ENCODE measurements at regions of chr4 and their contacts with region 1.

Region 1: DNA sequence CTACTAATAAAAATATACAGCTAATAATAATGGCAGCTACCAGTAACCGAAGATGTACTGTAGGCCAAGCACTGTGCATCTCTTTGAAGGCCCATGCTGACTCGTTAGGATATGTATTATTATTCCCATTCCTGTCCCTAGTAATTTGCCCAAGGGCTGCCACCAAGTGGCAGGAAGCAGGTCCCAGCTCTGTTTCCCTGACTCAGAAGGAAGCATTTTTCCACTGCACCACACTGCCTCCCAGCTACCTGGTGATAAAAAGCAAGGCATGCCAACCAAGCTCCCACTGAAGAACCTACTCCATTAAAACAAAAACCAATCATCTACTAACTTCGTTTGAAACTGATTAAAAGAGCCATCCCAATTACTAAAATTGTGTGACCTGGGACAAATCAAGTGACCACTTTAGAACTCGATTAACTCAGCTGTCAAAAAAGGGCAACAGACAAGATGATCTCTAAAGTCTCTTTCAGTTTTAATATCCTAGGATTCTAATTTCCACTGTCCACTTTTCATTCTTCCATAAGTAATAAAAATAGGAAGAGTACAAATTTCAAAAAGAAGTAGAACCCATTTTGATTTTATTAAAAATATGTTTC is 24.3 kb upstream of the PGM2 start:
- DNase-seq: peak; percentile 63 to 78
- H3K4me3 ChIP-seq: no peak overlapping the region
- H3K27ac ChIP-seq: no peak overlapping the region
- H3K4me1 ChIP-seq: no peaks in the 10 kb centered on the region
- H3K27me3 ChIP-seq: no peaks in the 10 kb centered on the region
- CTCF ChIP-seq: peak; percentile 12 to 97 (median 72)
- POLR2A ChIP-seq: no peak

Region 2: DNA sequence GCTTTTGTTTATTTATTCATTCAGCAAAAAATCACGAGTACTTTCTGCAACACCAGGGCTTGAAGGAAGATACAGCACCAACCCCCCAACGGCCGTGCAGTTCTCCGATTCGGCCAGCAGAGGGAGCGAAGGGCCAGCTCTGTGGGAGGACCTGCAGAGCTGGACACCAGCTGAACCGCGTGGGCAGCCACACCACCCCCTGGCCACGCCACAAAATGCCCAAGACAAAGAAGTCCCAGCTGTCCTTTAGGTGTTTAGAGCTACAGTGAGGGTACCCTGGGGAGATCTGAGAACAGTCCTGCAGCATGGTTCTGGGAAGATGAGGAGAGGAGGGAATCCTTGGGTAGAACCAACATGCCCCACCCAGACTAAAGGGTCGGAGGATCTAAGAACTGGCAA is 199.1 kb before region 1 on chr4:
- intact Hi-C with region 1: loop called (anchors 2 kb)
- DNase-seq: peak; percentile 83 to 87
- H3K4me3 ChIP-seq: no peak overlapping the region
- H3K27ac ChIP-seq: no peak overlapping the region
- H3K4me1 ChIP-seq: peaks cover 0 to 6% of the 10 kb centered on the region in 2 donors
- H3K27me3 ChIP-seq: no peaks in the 10 kb centered on the region
- CTCF ChIP-seq: peak; percentile 96 to 99 (median 98)
- POLR2A ChIP-seq: no peak

Region 3: DNA sequence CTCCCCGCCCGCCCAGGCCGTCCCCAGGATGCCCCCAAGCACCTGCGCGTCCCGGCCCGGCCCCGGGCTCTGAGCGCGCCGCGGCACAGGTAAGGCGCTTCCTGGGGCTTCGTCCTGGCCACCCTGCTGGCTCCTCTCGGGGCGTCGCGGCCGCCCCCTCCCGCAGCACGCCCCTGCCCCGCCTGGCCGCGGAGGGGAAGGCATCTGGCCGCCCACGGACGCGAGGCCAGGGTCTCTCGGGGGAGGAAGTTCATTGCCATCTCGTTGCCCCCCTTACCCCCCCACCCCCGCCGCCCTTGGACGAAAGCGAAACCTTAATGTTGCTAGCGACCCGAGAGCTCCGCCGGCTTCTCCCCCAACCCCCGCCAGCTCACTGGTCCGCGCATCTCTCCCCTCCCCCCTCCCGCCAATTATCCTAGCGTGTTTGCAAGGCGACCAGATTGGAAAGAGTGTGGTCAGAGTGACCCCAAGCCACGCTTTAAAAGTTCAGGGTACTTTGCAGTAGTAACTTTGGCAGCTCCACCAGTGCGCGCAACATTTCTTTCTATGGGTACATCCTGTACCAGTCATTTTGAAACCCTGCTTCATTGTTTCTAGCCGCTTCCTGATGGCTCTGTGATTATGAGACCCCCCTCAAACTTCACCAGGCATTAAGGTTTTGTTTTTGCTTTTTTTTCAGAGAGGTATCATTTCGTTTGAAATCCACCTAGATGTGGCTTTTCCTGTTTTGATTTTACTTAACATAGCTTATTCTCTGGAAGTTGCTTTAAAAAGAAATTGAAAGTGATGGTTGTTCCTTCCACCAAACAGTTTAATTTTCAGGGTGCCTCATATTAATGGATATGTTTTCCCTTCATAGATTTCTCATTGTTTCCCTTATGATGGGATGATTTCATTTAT is 89.3 kb after region 1 on chr4:
- intact Hi-C with region 1: loop called (anchors 10 kb)
- DNase-seq: peak; percentile 64 to 65
- H3K4me3 ChIP-seq: peak overlapping the region; percentile 27 to 94 (median 77)
- H3K27ac ChIP-seq: peak overlapping the region; percentile 75 to 89 (median 78)
- H3K4me1 ChIP-seq: peaks cover 0 to 9% of the 10 kb centered on the region in 2 donors
- H3K27me3 ChIP-seq: no peaks in the 10 kb centered on the region
- CTCF ChIP-seq: no peak
- POLR2A ChIP-seq: peak in 1 of 2 donors; percentile 22

Region 4: GRCh38 chr4:38046728-38047489 is 244.7 kb after region 1 on chr4:
- intact Hi-C with region 1: no loop called
- DNase-seq: peak; percentile 78 to 81
- H3K4me3 ChIP-seq: no peak overlapping the region
- H3K27ac ChIP-seq: peak overlapping the region; percentile 13 to 90 (median 72)
- H3K4me1 ChIP-seq: peaks cover 37 to 39% of the 10 kb centered on the region in 2 donors
- H3K27me3 ChIP-seq: no peaks in the 10 kb centered on the region
- CTCF ChIP-seq: peak in 1 of 6 experiments; percentile 20
- POLR2A ChIP-seq: peak in 1 of 2 donors; percentile 83